Mammary epithelial cell (primary cell): ENCODE measurements at regions of chr22 and their contacts with region 1.

Region 1: DNA sequence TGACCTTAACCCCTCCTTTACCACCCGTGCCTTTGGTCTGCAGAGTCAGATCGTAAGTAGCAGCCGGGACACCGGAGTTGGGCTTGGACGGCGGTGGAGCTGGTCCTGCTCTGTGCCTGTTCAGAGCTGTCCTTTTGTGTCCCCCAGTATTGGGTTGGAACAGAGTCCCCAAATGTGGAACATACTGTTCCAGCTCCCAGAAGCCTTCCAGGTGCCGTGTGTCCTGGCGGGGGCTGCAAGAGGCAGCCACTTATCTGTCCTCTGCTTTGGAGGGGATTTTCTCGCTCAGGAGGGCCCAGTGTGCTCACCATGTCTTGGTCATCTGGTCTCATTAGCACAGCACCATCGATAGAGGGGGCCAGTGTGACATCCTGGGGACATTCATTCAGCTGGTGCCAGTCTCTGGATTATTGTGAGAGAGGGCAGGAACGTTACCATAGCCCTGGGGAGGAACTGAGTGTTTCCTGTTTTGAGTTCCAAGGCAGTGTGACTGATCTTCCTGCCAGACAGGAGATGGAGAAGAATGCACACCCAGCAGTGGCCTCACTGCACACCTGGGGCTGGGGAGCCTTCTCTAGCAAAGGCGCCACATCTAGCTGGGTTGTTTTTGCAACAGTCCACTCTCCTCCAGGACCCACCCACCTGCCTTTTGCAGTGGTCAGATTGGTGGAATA is 12.4 kb downstream of the CRELD2 start:
- DNase-seq: peak; percentile 69
- H3K4me3 ChIP-seq: no peak overlapping the region
- H3K27ac ChIP-seq: no peak overlapping the region
- H3K4me1 ChIP-seq: peaks cover 13% of the 10 kb centered on the region
- H3K27me3 ChIP-seq: no peaks in the 10 kb centered on the region
- CTCF ChIP-seq: peak; percentile 20 to 73

Region 2: DNA sequence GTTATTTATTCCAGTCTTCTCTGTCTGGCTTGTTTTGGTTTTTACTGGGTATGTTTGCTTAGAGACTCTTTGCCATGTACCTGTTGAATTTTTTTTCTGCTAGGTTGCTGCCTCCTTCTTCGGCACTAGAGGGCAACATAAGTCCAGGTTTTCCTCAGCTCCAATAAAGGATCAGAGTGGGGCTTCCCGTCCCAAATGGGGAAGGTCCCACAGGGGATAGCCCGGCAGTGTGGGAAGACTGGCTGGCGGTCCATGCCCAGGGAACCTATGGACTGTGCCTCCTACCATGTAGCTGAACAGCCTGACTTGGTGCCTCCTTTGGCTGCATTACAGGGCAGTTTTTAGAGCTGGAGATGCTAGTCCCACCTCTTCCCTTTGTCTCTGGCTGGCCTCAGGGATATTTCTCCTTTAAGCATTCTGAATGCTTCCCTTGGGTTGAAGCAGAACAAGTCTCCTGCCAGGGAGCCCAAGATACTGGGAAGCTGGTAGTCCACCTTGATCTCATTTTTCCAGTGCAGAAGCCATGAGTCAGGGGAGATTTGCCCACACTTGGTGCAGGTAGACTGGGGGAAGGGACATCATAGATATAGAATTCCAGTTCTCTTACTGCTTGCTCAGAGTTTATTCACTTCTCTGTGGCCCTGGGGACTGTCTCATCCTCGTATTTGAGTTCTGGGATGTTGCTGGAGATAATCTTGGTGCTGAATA is 163.4 kb before region 1 on chr22:
- CTCF ChIA-PET with region 1: interaction called, 3 read pairs
- dilution Hi-C with region 1: no loop called
- in situ Hi-C with region 1: no loop called
- intact Hi-C with region 1: loop called (anchors 1 kb)
- DNase-seq: peak; percentile 52
- H3K4me3 ChIP-seq: no peak overlapping the region
- H3K27ac ChIP-seq: no peak overlapping the region
- H3K4me1 ChIP-seq: peaks cover 10% of the 10 kb centered on the region
- H3K27me3 ChIP-seq: no peaks in the 10 kb centered on the region
- CTCF ChIP-seq: peak; percentile 71 to 82

Region 3: GRCh38 chr22:49827853-49828598 is 102.8 kb before region 1 on chr22 and contains the start of gene BRD1:
- CTCF ChIA-PET with region 1: no interaction called
- dilution Hi-C with region 1: no loop called
- in situ Hi-C with region 1: no loop called
- intact Hi-C with region 1: no loop called
- DNase-seq: peak; percentile 49
- H3K4me3 ChIP-seq: peak within 1 kb of the TSS; percentile 66 to 91 (median 75)
- H3K27ac ChIP-seq: peak within 1 kb of the TSS; percentile 77
- H3K4me1 ChIP-seq: peaks cover 25% of the 10 kb centered on the region
- H3K27me3 ChIP-seq: no peaks in the 10 kb centered on the region
- CTCF ChIP-seq: no peak
- total RNA-seq, gene BRD1: 25.5 to 26.9 TPM

Region 4: GRCh38 chr22:49960159-49961004 is 29.5 kb after region 1 on chr22 and contains the start of gene PIM3:
- CTCF ChIA-PET with region 1: no interaction called
- dilution Hi-C with region 1: no loop called
- in situ Hi-C with region 1: no loop called
- intact Hi-C with region 1: loop called (anchors 1 kb)
- DNase-seq: peak; percentile 95
- H3K4me3 ChIP-seq: peak within 1 kb of the TSS; percentile 58 to 93 (median 71)
- H3K27ac ChIP-seq: peak within 1 kb of the TSS; percentile 69
- H3K4me1 ChIP-seq: peaks cover 23% of the 10 kb centered on the region
- H3K27me3 ChIP-seq: no peaks in the 10 kb centered on the region
- CTCF ChIP-seq: no peak
- total RNA-seq, gene PIM3: 26.6 to 68.7 TPM

Region 5: GRCh38 chr22:49992921-49993648 is 62.2 kb after region 1 on chr22:
- CTCF ChIA-PET with region 1: no interaction called
- dilution Hi-C with region 1: no loop called
- in situ Hi-C with region 1: no loop called
- intact Hi-C with region 1: loop called (anchors 1 kb)
- DNase-seq: peak; percentile 25
- H3K4me3 ChIP-seq: no peak overlapping the region
- H3K27ac ChIP-seq: no peak overlapping the region
- H3K4me1 ChIP-seq: no peaks in the 10 kb centered on the region
- H3K27me3 ChIP-seq: no peaks in the 10 kb centered on the region
- CTCF ChIP-seq: peak; percentile 59 to 83

Region 6: DNA sequence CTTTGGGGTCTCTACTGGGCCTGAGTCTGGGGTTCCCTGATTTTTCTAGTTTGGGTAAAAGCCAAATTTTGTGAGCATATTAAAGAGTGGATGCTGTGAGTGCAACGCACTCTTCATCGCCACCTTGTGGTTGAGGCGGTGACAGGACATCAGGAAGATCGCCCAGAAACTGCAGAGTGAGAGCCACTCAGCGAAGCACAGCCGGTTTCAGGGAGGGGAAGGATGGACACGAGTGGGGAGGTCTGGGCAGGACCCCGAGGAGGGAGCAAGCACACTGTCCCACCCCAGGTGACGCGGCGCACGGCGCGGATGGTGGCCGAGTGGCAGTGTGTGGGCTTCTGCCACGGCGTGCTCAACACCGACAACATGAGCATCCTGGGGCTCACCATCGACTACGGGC is 279.0 kb after region 1 on chr22:
- CTCF ChIA-PET with region 1: no interaction called
- dilution Hi-C with region 1: no loop called
- in situ Hi-C with region 1: loop called in 1 of 2 experiments (anchors 25 kb)
- intact Hi-C with region 1: loop called (anchors 2 kb)
- DNase-seq: peak; percentile 37
- H3K4me3 ChIP-seq: no peak overlapping the region
- H3K27ac ChIP-seq: no peak overlapping the region
- H3K4me1 ChIP-seq: no peaks in the 10 kb centered on the region
- H3K27me3 ChIP-seq: no peaks in the 10 kb centered on the region
- CTCF ChIP-seq: peak; percentile 83 to 93